Astrocyte of the cerebellum (primary cell): ENCODE measurements at regions of chr1 and their contacts with region 1.

Region 1: DNA sequence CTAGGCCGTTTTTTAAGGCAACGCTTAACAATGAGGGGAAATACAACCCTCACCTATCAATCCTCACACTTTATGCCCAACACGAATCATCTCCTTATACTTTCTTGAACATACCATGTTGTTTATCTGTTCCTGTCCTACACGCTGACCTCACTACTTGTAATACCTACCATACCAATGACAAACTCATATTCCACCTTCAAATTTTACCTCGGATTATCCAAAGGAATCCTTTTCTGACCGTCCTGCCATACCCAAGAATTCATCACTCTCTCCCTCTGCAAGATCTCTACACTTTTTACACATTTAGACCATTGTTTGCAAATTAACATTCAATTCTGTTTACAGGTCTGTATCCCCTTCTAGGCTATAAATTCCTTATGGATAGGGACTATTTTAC is 64.4 kb upstream of the GUCA2A start:
- DNase-seq: no peak
- H3K4me3 ChIP-seq: no peak overlapping the region
- CTCF ChIP-seq: no peak

Region 2: GRCh38 chr1:42173155-42173933 is 55.6 kb before region 1 on chr1:
- in situ Hi-C with region 1: no loop called
- DNase-seq: no peak
- H3K4me3 ChIP-seq: no peak overlapping the region
- CTCF ChIP-seq: peak; percentile 97

Region 3: DNA sequence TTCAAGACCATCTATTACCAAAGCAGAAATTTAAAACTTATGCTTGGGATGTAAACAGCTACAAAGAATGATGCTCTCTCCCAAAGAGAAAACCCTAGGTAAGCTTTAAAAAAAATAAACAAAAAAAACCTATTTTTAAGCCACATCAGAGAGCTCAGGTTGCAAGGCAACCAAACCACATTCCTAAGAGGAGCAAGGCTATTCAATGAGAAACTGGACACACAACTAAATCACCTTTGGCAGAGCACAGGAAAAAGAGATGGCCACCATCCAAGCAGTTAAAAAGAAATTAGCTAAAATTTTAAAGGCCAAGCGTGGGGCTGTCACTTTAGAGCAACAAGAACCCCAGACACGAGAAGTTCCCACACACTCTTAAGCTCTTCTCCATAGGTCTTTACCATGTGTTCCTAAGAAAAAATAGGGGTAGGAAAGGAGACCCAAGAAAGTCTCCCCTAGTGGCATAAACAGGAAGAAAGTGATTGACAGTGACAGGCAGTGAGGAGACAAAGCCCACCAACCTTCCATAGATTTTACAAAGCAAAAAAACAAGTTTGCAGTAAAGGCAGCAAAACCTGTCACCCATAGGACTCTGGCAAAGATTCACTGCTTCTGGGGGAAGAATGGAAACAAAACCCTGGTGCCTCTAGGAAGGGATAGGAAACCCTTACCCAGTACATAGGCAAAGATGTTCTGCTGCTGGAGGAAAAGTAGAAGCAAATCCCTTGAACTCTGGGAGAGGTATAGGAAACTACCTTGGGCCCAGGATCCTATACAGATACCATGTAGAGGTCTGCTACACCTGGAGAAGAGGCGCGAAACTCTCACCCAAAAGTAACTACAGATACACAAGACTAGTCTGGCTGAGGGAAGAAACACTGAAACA is 37.6 kb after region 1 on chr1:
- in situ Hi-C with region 1: loop called (anchors 5 kb)
- DNase-seq: peak; percentile 29
- H3K4me3 ChIP-seq: no peak overlapping the region
- CTCF ChIP-seq: no peak